ENCODE measurements at regions of chr1 and their contacts with region 1.

Region 1: GRCh38 chr1:221435504-221435904 is 306.4 kb downstream of the DUSP10 start:
- DNase-seq: no peak
- H3K4me3 Mint-ChIP-seq: no peak overlapping the region
- H3K27ac Mint-ChIP-seq: no peak overlapping the region
- H3K4me1 Mint-ChIP-seq: peaks cover 34% of the 10 kb centered on the region
- H3K27me3 Mint-ChIP-seq: peaks cover 4% of the 10 kb centered on the region

Region 2: DNA sequence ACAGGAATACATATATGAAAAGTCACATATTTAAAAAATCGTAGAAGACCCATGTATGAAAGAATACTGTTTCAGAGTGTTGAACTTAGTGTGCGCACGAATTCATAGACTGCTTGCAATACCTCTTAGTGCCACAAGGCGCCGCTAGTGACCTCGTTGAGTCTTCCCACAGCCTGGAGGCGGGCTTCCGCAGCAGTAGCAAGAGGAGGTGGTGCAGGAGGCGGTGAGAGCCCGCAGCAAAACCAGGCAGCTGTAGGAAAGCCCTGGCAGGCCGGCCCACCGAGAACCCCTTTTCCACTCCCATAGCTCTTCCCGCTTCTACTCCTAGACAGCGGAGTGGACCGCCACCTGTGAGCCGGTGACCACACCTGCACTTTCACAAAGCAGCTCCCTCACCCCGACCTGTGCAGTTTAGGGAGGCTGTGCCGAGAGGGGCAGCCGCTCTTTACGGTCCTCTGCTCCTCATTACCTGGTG is 625.3 kb before region 1 on chr1:
- CTCF ChIA-PET with region 1: interaction called, 7 read pairs
- intact Hi-C with region 1: loop called (anchors 1 kb)
- DNase-seq: peak; percentile 81
- H3K4me3 Mint-ChIP-seq: peak overlapping the region; percentile 22
- H3K27ac Mint-ChIP-seq: no peak overlapping the region
- H3K4me1 Mint-ChIP-seq: peaks cover 3% of the 10 kb centered on the region
- H3K27me3 Mint-ChIP-seq: peaks cover 21% of the 10 kb centered on the region

Region 3: DNA sequence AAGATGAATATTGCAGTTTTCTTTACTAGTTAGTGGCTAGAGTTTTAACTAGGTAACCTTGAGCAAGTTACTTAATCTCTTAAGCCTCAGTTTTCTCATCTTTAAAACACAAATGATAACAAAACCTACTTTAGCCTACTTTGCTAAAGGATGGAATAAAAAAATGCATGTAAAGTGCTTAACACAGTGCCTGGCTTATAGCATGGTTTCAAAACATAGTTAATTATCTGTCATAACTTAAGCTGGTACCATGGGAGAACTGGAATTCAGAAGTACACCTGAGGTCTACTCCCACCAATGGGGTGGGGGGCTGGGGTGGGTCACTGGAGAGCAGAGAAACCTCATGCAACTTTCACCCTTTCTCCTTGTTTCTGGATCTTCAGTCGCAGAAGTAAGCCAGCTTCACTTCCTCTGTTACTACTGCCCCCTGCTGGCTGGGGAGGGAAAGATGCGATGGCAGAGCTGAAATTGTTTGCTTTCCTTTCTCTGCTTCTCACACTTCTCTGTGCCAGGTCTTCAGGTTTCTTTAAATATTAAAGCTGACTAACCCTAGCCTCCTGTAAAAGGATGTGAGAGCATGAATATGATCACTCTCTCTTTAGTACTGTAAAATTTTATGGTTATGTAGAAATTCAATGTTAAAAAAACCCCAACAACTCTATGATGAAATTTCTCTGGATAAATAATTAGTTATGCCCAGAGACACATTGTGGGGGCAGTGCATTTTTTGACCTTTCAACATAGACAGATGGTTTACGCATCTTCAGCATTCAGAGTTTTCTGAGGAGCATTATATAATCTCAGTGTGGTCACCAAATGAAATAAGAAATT is 232.1 kb before region 1 on chr1:
- CTCF ChIA-PET with region 1: interaction called, 8 read pairs
- intact Hi-C with region 1: loop called (anchors 2 kb)
- DNase-seq: peak; percentile 84
- H3K4me3 Mint-ChIP-seq: no peak overlapping the region
- H3K27ac Mint-ChIP-seq: no peak overlapping the region
- H3K4me1 Mint-ChIP-seq: peaks cover 2% of the 10 kb centered on the region
- H3K27me3 Mint-ChIP-seq: peaks cover 2% of the 10 kb centered on the region

Region 4: DNA sequence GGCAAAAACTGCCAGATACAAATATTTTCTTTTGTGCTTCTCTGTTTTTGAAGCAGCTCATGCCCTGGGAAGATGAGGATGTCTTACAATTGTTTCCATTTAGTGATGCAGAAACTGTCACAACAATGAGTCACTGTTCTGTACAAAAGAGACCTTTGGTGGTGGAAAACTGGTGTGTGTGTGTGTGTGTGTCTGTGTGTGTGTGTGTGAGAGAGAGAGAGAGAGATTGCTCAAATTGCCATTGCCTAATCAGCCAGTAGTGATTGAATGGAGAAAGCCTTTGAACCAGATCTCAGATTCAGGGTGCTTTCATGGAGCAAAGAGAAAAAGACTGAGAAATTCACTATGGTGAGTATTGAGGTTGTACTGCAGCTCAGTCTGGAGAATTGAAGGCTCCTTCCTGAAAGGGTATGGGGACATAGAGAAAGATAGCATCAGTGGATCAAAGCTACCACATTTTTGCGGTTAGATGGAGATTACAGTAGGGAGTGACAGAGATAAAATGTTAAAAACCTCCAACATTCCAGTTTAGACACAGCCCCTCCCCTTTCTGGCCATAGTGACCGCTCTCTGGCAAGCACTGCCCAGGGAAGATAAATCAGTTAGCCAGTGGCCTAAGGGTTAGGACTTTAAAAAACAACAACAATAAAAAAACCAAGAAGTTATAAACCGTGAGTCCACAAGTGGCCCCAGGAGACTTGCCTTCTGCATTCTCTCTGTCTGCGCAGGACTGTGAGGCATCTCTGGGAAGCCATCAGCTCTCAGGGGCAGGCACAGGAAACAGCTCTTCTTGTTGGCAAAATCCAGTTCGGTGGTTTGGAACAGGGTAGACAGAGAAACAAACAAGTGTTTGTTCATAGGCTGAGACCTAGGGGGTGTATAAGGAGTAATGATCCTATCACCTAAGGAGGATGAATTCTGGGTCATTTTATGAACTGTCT is 100.1 kb before region 1 on chr1:
- CTCF ChIA-PET with region 1: no interaction called
- intact Hi-C with region 1: no loop called
- DNase-seq: no peak
- H3K4me3 Mint-ChIP-seq: no peak overlapping the region
- H3K27ac Mint-ChIP-seq: no peak overlapping the region
- H3K4me1 Mint-ChIP-seq: no peaks in the 10 kb centered on the region
- H3K27me3 Mint-ChIP-seq: peaks cover 16% of the 10 kb centered on the region

Region 5: GRCh38 chr1:221708987-221709386 is 273.5 kb after region 1 on chr1:
- CTCF ChIA-PET with region 1: no interaction called
- intact Hi-C with region 1: loop called (anchors 1 kb)
- DNase-seq: peak; percentile 42
- H3K4me3 Mint-ChIP-seq: no peak overlapping the region
- H3K27ac Mint-ChIP-seq: no peak overlapping the region
- H3K4me1 Mint-ChIP-seq: peaks cover 53% of the 10 kb centered on the region
- H3K27me3 Mint-ChIP-seq: no peaks in the 10 kb centered on the region

Region 6: DNA sequence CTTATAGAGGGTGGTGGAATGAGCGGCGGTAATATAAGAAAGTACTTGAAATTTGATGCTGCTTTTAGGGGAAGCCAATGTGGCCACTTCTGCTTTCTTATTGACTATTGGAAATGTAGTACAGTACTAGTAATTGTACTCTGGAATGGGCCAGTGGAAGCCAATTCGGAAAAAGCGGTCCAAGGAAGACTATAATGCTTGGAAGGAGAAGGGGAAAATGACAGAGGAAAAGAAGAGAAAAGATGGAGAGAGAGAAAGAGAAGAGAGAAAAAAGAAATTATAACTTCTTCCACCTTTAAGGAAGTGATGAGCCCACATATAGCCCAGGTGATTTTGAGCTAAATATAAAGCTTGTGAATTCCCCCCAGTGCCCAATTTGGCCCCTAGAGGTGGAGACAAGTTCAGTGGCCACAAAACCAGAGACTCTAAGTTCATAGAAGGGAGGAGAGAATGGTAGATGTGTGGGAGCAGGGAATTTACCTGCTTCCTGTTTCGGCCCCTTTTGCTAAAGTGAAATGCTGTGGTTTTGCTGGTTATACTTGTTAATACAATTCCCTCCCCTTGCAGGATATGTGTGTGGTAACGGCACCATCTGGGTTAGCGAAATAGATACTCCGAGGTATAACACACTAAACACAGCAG is 342.0 kb after region 1 on chr1:
- CTCF ChIA-PET with region 1: no interaction called
- intact Hi-C with region 1: loop called (anchors 1 kb)
- DNase-seq: peak; percentile 79
- H3K4me3 Mint-ChIP-seq: peak overlapping the region; percentile 49
- H3K27ac Mint-ChIP-seq: peak overlapping the region; percentile 89
- H3K4me1 Mint-ChIP-seq: peaks cover 74% of the 10 kb centered on the region
- H3K27me3 Mint-ChIP-seq: no peaks in the 10 kb centered on the region

Region 7: GRCh38 chr1:221878134-221878533 is 442.6 kb after region 1 on chr1:
- CTCF ChIA-PET with region 1: interaction called, 3 read pairs
- intact Hi-C with region 1: loop called (anchors 1 kb)
- DNase-seq: no peak
- H3K4me3 Mint-ChIP-seq: no peak overlapping the region
- H3K27ac Mint-ChIP-seq: no peak overlapping the region
- H3K4me1 Mint-ChIP-seq: peaks cover 9% of the 10 kb centered on the region
- H3K27me3 Mint-ChIP-seq: peaks cover 11% of the 10 kb centered on the region